Cardiac septum (tissue), 1 donor: ENCODE measurements at regions of chr6 and their contacts with region 1.

Region 1: DNA sequence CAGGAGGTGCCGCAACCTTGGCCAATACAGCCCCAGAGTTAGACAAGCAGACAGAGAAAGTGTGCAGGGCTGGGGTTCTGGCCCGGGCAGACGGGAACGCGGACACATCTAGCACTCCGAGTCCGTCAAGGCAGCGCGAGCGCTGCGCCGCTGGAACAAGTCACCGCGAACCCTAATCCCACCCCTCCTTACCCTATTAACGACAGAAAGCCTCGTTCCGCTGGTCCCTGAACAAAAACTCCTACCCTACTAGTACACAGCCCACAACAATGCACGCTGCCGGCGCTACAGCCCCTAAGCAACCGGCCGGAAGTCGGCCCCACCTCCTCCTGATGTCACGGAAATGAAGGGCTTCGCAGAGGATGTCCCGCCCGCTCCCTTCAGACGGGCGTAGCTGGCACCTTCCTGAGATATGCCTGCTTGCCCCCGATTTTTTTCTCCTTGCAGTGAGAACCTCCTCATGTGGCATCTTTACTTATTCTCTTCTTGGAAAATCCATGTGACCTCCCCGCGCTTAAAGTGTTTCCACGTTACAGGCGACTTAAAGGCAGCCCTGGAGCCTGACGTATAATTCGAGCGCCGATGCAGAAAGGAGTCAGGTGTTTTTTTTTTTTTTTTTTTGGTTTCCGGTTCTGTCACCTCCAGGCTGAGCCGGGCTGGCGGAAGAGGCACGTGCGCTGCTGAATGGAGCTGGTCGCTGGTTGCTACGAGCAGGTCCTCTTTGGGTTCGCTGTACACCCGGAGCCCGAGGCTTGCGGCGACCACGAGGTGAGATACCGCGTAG is at the starts of genes C6orf52 and PAK1IP1:
- DNase-seq: peak; percentile 97
- total RNA-seq, gene C6orf52: 1.7 TPM
- total RNA-seq, gene PAK1IP1: 9.3 TPM

Region 2: DNA sequence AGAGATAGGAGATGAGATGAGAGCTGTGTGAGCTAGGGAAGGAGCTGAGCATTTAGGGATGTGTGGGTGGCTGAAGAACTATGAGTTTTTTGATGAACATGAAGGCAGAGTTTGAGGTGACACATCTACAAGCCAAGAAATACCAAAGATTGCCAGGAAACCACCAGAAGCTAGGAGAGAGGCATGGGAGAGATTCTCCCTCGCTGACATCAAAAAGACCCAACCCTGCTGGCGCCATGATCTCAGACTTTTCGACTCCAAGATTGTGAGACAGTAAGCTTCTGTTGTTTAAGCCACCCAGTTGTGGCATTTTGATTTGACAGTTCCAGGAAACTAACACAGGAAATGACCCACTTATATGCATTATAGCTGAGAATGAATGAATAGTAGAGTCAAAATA is 1070.5 kb before region 1 on chr6:
- intact Hi-C with region 1: no loop called
- DNase-seq: no peak

Region 3: GRCh38 chr6:9957215-9957759 is 737.2 kb before region 1 on chr6:
- intact Hi-C with region 1: no loop called
- DNase-seq: no peak

Region 4: DNA sequence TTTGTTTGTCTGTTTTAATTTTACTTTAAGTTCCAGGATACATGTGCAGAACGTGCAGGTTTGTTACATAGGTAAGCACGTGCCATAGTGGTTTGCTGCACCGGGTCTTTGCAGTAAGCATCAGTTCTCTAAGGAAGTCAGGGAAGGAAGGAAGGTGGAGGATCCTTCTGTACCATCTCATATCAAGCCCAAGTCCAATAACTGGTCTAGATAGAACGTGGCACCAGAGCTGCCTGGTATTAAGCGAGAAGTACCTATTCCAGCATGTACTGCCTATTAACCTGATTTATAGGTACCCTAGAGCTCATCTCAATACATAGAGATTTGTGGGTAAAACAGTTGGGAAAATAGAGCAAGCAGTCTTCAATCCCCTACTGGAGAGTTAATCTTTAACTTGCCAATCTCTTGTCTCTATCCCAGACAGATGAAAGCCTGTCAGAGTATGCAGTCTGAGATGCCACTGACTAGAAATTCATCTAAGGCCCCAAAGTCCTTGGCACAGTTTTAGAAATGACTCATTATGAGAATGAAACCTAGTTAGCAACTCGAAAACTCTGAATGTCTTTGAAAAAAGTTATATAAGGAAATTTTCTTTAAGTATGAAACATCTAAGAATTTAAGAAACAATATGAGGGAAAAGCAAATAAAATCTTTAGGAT is 424.6 kb before region 1 on chr6:
- intact Hi-C with region 1: no loop called
- DNase-seq: no peak

Region 5: DNA sequence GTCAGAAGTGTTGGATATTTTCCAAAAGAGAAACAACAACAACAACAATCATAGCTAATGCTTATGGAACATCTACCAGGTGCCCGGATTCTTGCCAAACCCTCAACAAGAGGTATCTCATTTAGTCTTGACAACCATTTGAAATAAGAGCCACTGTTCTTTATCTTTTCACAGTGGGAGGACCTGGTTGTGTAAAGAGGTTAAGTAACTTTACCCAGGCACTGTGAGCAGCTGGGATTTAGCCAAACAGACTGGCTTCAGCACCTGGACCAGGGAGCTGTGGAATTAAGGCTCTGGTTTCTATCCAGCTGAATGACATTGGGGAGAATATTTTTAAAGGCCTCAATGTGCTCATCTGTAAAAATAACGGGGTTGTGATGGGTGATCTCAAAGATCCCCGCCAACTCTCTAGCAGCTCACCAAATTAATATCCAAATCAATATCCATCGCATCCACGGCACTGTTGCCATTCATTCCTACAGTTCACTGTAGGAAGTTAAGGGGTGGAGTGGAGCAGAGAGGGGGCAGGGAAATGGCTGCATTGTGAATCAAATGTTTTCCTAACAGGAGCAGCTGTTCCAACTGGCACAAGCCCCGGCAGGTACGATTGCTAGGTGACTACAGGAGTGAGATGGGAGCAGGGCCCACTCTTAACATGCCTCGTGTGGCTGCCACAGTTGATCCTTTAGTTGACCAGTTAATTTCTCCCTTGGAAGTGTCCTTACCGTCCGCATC is 111.6 kb before region 1 on chr6:
- intact Hi-C with region 1: loop called (anchors 10 kb)
- DNase-seq: no peak

Region 6: DNA sequence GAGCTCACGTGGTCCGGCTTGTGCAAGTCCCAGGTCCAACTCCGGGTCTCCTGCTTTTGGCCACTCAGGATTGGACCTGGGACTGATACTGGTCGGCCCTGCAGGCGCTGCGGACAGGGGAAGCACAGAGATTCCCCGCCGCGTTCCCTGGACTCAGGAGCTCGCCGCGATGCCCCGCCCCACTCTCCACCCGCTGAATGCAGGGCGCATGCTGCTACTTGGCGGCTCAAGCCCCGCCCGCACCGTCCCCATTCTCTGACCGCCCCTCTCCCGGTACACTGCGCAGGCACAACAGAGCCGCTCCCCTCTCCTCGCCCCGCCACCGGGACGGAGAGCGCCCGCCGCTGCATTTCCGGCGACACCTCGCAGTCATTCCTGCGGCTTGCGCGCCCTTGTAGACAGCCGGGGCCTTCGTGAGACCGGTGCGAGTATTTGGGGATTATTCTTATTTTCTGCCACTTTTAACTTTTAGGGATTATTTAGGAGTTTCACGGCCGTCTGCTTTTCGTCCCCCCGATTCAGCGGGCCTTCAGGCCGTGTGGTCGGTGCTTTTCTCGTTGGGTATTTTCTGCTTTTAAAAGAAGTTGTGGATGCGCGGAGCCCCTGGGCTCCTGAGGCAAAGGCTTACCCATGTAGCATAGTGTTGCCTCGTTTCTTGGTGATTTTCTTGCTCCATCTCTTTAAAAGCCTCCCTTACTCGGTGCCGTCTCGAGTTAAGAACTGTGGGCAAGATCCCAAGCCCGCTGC is 28.5 kb after region 1 on chr6 and contains the start of gene TMEM14C:
- intact Hi-C with region 1: loop called (anchors 1 kb)
- DNase-seq: peak; percentile 99
- total RNA-seq, gene TMEM14C: 112 TPM

Region 7: GRCh38 chr6:10747251-10747972 is 52.9 kb after region 1 on chr6 and contains the start of gene TMEM14B:
- intact Hi-C with region 1: loop called (anchors 2 kb)
- DNase-seq: peak; percentile 100
- total RNA-seq, gene TMEM14B: 92.4 TPM